AG04449 (cell line): ENCODE measurements at regions of chr2 and their contacts with region 1.

Region 1: DNA sequence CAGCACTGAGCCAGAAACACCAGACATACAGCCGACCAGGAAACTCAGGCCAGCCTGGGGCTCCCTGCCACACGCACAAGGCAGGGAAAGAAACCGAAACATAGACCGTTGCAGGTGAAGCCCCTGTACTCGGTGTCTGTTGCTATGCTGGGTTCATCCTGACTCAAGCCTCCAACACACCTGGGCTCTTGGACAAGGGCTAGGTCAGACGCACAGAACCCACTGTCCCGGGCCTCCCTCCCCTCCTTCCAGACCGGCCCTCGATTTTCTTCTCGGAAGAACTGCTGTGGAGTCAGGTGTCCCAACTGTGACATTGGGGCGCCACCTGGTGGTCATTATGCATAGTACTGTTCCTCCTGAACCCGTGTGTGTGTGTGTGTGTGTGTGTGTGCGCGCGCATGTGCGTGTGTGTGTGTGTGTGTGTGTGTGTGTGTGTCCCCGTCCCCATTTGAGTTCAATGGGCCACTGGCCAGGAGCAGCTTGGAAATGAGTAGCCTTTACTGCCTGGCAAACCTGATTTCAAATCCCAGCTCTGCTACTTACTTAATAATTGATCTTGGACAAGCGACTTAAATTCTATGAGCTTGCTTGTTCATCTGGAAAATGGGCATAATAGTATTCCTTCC is 55.4 kb upstream of the GLI2 start:
- DNase-seq: no peak
- H3K4me3 ChIP-seq: no peak overlapping the region
- CTCF ChIP-seq: peak; percentile 79

Region 2: GRCh38 chr2:120109186-120110061 is 570.8 kb before region 1 on chr2:
- CTCF ChIA-PET with region 1: interaction called, 13 read pairs
- POLR2A ChIA-PET with region 1: no interaction called
- DNase-seq: no peak
- H3K4me3 ChIP-seq: no peak overlapping the region
- CTCF ChIP-seq: peak; percentile 24

Region 3: DNA sequence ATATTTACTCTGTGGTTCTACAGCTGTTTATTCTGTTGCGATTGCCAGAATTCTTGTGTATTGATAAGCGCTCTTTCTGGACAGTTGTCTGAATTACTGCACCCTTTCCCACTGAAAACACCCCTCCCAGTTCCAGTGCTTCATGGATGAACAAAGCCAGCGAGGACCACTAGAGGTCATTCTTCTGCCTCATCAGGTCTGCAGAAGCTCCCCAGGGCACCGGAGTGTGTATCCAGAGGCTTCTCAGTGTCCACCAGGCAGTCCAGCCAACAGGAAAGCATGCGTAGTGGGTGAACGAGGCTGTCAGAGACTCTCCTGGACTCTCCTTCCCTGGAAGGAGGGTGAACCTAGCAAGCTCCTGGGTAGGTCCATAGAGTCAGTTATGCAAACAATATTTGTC is 375.0 kb before region 1 on chr2:
- CTCF ChIA-PET with region 1: interaction called, 202 read pairs
- POLR2A ChIA-PET with region 1: no interaction called
- DNase-seq: no peak
- H3K4me3 ChIP-seq: no peak overlapping the region
- CTCF ChIP-seq: peak; percentile 35

Region 4: GRCh38 chr2:120323214-120323613 is 357.0 kb before region 1 on chr2:
- CTCF ChIA-PET with region 1: interaction called, 202 read pairs
- POLR2A ChIA-PET with region 1: no interaction called
- DNase-seq: no peak
- H3K4me3 ChIP-seq: no peak overlapping the region
- CTCF ChIP-seq: no peak

Region 5: GRCh38 chr2:120546048-120546864 is 134.0 kb before region 1 on chr2:
- CTCF ChIA-PET with region 1: interaction called, 10 read pairs
- POLR2A ChIA-PET with region 1: no interaction called
- DNase-seq: peak; percentile 98
- H3K4me3 ChIP-seq: 0 out of 2 replicates have a peak overlapping the region, but pooled peaks have one; percentile 15
- CTCF ChIP-seq: peak; percentile 8

Region 6: GRCh38 chr2:120949027-120949956 is 269.0 kb after region 1 on chr2:
- CTCF ChIA-PET with region 1: no interaction called
- POLR2A ChIA-PET with region 1: no interaction called
- DNase-seq: no peak
- H3K4me3 ChIP-seq: no peak overlapping the region
- CTCF ChIP-seq: peak; percentile 42

Region 7: DNA sequence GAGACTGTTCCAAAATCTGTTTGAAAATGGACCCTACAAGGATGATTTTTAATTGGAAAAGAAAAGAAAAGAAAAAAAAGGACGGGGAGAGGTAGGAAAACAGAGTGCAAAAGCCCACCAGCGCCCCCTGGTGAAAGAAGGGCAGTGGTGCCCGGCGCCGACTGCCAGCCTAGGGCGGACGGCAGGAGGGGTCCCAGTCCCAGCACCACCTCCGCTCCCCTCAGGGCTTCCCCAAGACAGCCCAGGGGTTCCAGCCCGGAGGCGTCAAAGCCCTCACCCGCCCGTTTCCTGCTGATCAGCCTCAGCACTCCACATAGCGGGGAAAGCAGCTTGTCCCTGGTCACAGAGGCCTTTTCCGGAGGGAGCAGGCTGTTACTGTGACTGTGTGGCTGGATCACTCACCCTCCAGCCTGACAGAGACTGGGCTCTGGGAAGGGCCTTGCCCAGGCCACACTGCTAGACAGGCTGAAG is 390.8 kb after region 1 on chr2:
- CTCF ChIA-PET with region 1: interaction called, 767 read pairs
- POLR2A ChIA-PET with region 1: interaction called, 17 read pairs
- DNase-seq: no peak
- H3K4me3 ChIP-seq: no peak overlapping the region
- CTCF ChIP-seq: peak; percentile 91

Region 8: DNA sequence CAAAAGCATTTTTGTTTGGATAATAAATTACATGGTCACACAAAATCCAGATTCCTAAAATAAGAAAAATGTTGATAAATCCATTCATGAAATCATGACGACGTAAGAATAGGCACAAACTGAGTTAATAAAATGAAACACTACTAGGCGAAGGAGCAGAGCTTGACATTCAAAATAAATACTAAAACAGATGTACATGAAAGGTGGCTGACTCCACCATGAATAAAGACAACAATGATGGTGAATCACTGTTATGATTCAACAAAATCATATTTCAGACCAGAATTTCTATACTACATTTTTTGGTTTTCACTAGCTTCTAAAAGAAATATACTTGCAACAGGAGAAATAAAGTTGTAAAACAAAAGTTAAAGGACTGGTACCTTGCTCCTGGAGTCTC is 728.4 kb after region 1 on chr2:
- CTCF ChIA-PET with region 1: no interaction called
- POLR2A ChIA-PET with region 1: no interaction called
- DNase-seq: no peak
- H3K4me3 ChIP-seq: no peak overlapping the region
- CTCF ChIP-seq: no peak